ENCODE measurements at regions of chr10 and their contacts with region 1.

Region 1: DNA sequence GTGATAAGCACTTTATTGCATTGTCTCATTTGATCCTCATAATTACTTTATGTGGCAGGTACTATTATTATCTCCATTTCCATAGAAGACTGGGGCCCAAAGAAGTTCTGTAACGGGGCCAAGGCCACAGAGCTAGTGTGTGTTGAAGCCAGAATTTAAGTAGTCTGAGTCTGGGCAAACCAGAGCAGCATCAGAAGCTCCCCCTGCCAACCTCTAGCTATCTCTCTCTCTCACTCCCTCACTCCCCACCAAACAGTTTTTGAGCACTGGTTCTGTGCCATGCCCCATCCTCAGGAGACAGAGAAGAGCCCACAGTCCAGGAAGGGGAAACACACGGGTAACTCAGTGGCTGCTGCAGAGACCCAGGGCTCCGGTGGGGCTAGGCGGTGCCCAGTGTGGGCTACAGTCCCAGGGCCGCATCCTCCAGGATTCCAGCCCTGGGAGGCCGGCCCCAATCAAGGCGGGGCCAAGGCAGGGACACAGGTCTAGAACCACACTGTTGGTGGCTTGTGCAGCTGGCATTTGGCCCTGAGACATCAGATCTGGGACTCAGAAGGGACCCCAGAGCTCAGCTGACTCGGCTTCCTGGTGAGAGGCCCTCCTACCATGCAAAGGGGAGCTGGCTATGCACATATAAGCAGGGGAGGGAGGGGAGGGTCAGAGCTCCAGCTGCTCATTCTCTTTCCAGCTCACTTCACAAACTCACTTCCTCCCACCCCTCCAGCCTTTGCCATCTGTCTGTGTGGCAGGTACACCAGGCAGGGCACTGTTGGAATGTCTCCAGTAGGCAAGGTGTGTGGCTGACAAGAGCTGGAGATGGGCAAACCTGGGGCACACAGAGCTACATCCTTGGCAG is 34.4 kb downstream of the COL13A1 start:
- DNase-seq: no peak
- H3K4me3 ChIP-seq: no peak overlapping the region
- H3K27ac ChIP-seq: no peak overlapping the region
- H3K4me1 ChIP-seq: no peaks in the 10 kb centered on the region
- H3K27me3 ChIP-seq: no peaks in the 10 kb centered on the region
- CTCF ChIP-seq: no peak

Region 2: GRCh38 chr10:69731184-69731583 is 104.9 kb before region 1 on chr10:
- CTCF ChIA-PET with region 1: interaction called, 10 read pairs
- POLR2A ChIA-PET with region 1: no interaction called
- intact Hi-C with region 1: no loop called
- DNase-seq: no peak
- H3K4me3 ChIP-seq: no peak overlapping the region
- H3K27ac ChIP-seq: no peak overlapping the region
- H3K4me1 ChIP-seq: no peaks in the 10 kb centered on the region
- H3K27me3 ChIP-seq: no peaks in the 10 kb centered on the region
- CTCF ChIP-seq: no peak